ENCODE measurements at regions of chr1 and their contacts with region 1.

Region 1: GRCh38 chr1:101506541-101507164 is 269.8 kb downstream of the S1PR1 start:
- DNase-seq: peak; percentile 35
- CTCF ChIP-seq: peak; percentile 74

Region 2: DNA sequence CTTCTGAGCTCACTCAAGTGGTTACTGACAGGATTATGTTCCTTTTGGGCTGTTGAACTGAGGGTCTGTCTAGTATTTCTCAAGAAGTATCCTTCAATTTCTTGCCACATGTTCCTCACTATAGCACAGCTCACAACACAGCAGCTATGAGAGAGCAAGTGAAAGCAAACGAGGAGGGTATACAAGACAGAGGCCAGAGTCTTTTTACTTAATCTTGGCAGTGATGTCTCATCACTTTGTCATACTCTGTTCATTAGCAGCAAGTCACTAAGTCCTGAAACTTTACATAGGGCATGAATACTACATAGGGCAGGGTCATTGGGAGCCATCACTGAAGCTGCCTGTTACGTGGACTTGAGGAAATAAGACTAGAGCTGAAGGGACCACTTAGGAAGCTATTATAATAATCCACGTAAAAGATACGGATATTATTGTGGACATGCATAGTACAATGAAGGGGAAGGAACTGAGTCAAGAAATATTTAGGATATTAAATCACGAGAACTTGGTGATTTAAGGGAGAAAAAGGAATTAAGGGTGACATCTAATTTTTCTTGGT is 547.1 kb before region 1 on chr1:
- CTCF ChIA-PET with region 1: no interaction called
- POLR2A ChIA-PET with region 1: no interaction called
- DNase-seq: no peak
- CTCF ChIP-seq: no peak

Region 3: DNA sequence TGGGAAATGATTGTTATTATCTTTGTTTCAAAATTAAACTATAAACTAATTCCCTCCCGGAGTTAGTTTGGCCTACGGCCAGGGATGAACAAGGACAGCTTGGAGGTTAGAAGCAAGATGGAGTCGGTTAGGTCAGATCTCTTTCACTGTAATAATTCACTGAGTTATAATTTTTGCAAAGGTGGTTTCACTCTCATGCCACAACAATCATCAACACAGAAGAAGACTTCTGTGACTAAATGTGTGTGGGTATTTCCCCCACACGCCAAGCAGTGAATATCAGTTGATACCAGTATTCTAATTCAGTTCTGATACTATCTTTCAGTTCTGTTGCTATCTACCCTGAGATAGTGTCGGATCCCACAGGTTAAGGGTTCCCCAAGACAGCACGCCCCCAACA is 54.8 kb before region 1 on chr1:
- CTCF ChIA-PET with region 1: interaction called, 13 read pairs
- POLR2A ChIA-PET with region 1: no interaction called
- DNase-seq: no peak
- CTCF ChIP-seq: no peak

Region 4: DNA sequence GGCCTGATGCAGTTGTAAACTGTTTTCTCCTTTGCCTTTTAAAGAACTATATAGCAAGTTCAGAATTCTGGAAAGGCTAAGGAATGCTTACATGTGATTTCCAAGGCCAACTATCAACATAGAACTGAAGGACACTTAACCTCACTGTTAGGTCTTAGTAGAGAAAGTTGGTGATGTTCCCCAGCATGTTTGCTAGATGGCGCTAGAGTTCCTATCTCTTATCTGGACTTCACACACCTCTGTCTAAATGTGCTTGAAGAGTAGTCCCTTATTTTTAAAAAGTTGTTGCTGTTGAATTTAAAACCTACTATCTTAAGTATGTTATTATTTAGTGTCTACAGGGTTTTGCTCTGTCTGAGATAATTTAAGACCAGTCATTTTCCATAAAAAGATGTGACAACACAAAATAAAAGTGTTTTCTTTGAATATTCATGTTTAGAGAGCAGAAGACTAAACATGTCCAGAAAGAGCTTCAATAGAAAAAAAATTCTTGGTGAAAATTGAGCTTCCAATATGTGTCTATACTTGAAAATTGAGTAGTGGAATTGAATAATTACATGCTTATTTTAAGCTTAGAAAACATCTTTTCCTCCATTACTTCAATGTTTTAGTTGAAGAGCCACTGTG is 32.5 kb before region 1 on chr1:
- CTCF ChIA-PET with region 1: interaction called, 22 read pairs
- POLR2A ChIA-PET with region 1: no interaction called
- DNase-seq: peak; percentile 17
- CTCF ChIP-seq: no peak

Region 5: DNA sequence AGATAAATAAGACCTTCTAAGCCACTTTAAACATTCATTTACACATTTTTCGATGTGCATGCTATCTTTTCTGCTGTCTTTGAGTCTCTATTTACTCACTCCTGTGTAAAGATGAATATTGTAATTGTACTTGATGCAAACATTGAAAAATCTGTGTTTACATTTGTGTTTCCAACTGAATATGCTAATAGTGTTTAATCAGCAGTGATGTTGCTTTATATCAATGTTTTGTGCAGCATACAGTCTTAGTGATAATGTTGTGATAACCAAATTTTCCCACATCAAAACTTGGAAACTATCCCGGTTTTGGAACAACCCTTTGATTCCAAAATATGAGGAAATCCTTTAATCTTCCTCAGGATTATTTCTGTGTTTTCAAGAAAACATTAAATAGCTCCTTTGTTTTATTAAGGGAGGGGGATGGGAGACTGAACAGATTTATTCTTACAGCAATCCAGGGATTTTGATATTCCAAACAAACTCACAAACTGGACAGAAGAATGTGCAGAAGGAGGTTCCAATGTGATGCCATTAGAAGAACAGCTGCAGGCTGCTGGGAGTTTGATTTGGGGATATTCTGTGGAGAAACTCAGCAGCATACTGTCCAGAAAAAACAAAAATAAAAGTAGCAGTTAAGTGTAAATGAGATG is 21.8 kb before region 1 on chr1:
- CTCF ChIA-PET with region 1: interaction called, 39 read pairs
- POLR2A ChIA-PET with region 1: no interaction called
- DNase-seq: no peak
- CTCF ChIP-seq: no peak

Region 6: GRCh38 chr1:101496109-101496508 is 10.5 kb before region 1 on chr1:
- CTCF ChIA-PET with region 1: interaction called, 11 read pairs
- POLR2A ChIA-PET with region 1: no interaction called
- DNase-seq: no peak
- CTCF ChIP-seq: no peak

Region 7: DNA sequence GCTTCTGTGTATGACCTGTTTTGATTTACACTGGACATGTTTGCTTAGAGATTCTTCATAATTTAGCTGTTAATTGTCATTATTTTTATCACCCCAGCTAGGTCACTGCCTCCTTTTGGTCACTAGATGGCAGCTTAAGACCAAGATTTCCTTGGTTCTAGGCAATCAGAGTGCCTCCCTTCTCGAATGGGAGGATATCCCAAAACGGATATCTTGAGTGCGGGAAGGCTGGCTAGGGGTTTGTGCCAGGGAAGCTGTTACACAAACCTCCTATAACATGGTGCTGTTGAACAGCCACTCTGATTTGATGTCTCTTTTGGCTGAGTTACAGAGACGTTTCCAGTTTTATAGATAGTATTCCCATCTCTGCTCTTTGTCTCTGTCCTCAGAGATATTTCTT is 13.6 kb after region 1 on chr1:
- CTCF ChIA-PET with region 1: interaction called, 31 read pairs
- POLR2A ChIA-PET with region 1: no interaction called
- DNase-seq: peak; percentile 32
- CTCF ChIP-seq: peak; percentile 81

Measured in GM10248 (cell line).